ENCODE measurements at regions of chr7 and their contacts with region 1.

Region 1: GRCh38 chr7:107014387-107015023 is 30.0 kb upstream of the PRKAR2B start:
- DNase-seq: no peak
- ATAC-seq: no peak
- H3K4me3 ChIP-seq: no peak overlapping the region
- H3K27ac ChIP-seq: peak overlapping the region; percentile 6; the same call in 1 of the 3 replicates
- H3K4me1 ChIP-seq: peaks cover 27 to 61% of the 10 kb centered on the region in 2 experiments
- H3K27me3 ChIP-seq: no peaks in the 10 kb centered on the region
- CTCF ChIP-seq: no peak
- EP300 ChIP-seq: no peak
- POLR2A ChIP-seq: no peak
- RAD21 ChIP-seq: no peak

Region 2: GRCh38 chr7:107025449-107026103 is 11.1 kb after region 1 on chr7:
- CTCF ChIA-PET with region 1: no interaction called
- POLR2A ChIA-PET with region 1: interaction called, 34 read pairs
- in situ Hi-C with region 1: no loop called
- intact Hi-C with region 1: no loop called
- DNase-seq: peak; percentile 63 to 89 (median 66)
- ATAC-seq: peak; percentile 79
- H3K4me3 ChIP-seq: no peak overlapping the region
- H3K27ac ChIP-seq: peak overlapping the region; percentile 54
- H3K4me1 ChIP-seq: peaks cover 40 to 55% of the 10 kb centered on the region in 2 experiments
- H3K27me3 ChIP-seq: no peaks in the 10 kb centered on the region
- CTCF ChIP-seq: no peak
- EP300 ChIP-seq: peak; percentile 86
- POLR2A ChIP-seq: no peak
- RAD21 ChIP-seq: peak in 1 of 2 experiments; percentile 25; a peak in 2 of 4 replicates